ENCODE measurements at regions of chr4 and their contacts with region 1.

Region 1: GRCh38 chr4:139279760-139280620 is at the start of gene MGARP:
- DNase-seq: peak in 2 of 3 donors; percentile 43 to 57
- H3K4me3 ChIP-seq: peak within 1 kb of the TSS; percentile 8 to 72 (median 58)
- H3K27ac ChIP-seq: no peak within 1 kb of the TSS
- H3K4me1 ChIP-seq: peaks cover 6 to 20% (median 13%) of the 10 kb centered on the region in 4 experiments
- H3K27me3 ChIP-seq: peaks cover 16 to 61% (median 20%) of the 10 kb centered on the region in 5 experiments

Region 2: DNA sequence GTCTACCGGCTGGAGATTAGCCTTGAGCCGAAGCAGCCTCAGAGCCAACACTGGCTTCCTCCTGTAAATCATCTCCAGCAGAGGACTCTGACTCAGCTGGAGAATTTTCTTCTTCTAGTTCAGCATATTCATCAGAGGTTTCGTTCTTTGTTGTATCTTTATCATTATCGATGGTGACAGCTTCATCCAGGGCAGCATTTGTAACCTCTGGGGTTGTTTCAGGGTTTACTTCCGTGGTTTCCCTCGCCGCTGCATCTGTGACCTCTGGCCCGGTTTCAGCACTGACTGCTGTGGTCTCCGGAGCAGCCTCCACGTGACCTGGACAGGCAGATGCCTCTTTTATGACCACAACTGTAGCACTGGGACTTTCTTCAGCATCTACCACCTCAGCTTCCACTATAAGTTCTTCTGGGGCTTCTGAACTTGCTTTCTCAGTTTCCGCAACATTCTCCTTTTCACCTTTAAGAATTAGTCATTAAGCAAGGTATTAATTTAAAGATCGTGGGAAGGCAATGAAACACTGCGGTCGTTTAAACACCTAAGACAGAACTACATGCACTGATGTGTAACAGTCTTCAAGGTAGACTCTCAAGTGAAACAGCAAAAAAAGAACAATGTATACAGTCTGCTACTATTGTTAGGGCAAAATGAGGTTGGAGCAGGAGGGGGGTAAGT is 13.3 kb before region 1 on chr4:
- CTCF ChIA-PET with region 1: interaction called, 11 read pairs
- POLR2A ChIA-PET with region 1: no interaction called
- DNase-seq: peak; percentile 43 to 91 (median 88)
- H3K4me3 ChIP-seq: peak overlapping the region in 6 of 7 experiments; percentile 35 to 73 (median 56)
- H3K27ac ChIP-seq: peak overlapping the region; percentile 15 to 59
- H3K4me1 ChIP-seq: peaks cover 4 to 18% (median 12%) of the 10 kb centered on the region in 4 experiments
- H3K27me3 ChIP-seq: no peaks in the 10 kb centered on the region

Region 3: GRCh38 chr4:139295206-139295941 is 15.4 kb after region 1 on chr4:
- CTCF ChIA-PET with region 1: interaction called, 20 read pairs
- POLR2A ChIA-PET with region 1: interaction called, 3 read pairs
- DNase-seq: peak; percentile 94 to 97 (median 96)
- H3K4me3 ChIP-seq: peak overlapping the region; percentile 81 to 97 (median 88)
- H3K27ac ChIP-seq: peak overlapping the region; percentile 89 to 91
- H3K4me1 ChIP-seq: peaks cover 5 to 24% (median 16%) of the 10 kb centered on the region in 4 experiments
- H3K27me3 ChIP-seq: no peaks in the 10 kb centered on the region

Region 4: GRCh38 chr4:139392797-139393196 is 112.8 kb after region 1 on chr4:
- CTCF ChIA-PET with region 1: no interaction called
- POLR2A ChIA-PET with region 1: no interaction called
- DNase-seq: no peak
- H3K4me3 ChIP-seq: no peak overlapping the region
- H3K27ac ChIP-seq: no peak overlapping the region
- H3K4me1 ChIP-seq: no peaks in the 10 kb centered on the region
- H3K27me3 ChIP-seq: no peaks in the 10 kb centered on the region

Region 5: DNA sequence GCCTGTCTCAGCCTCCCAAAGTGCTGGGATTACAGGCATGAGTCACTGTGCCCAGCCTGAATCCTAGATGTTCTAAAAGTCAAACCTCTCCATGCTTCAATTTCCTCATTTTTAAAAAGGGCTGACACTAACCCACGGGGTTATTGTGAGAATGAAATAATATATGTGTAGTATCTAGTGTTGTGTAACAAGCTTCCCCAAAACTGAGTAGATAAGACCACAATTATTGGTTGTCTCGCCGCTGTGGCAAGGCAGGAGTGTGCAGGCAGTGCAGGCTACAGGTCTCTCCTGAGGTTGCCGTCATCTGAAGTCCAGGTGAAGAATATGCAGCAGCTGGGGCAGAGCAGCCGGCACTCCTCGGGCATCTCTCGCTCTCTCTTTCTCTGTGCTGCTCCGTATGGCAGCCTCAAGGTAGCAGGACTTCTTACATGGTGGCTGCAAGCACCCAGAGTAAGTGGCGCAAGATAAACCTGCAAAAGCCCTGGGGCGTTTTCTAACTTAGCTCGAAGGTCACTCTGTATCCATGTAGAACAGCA is 204.9 kb after region 1 on chr4:
- CTCF ChIA-PET with region 1: no interaction called
- POLR2A ChIA-PET with region 1: no interaction called
- DNase-seq: peak in 2 of 3 donors; percentile 29 to 36
- H3K4me3 ChIP-seq: no peak overlapping the region
- H3K27ac ChIP-seq: no peak overlapping the region
- H3K4me1 ChIP-seq: peaks cover 0 to 2% (median 0%) of the 10 kb centered on the region in 4 experiments
- H3K27me3 ChIP-seq: no peaks in the 10 kb centered on the region

Measured in common myeloid progenitor, CD34-positive (primary cell).